ENCODE measurements at regions of chr17 and their contacts with region 1.

Region 1: GRCh38 chr17:1908699-1909309 is 79.0 kb downstream of the RPA1 start:
- DNase-seq: peak; percentile 39
- ATAC-seq: peak; percentile 90
- H3K4me3 ChIP-seq: no peak overlapping the region
- H3K27ac ChIP-seq: no peak overlapping the region
- H3K4me1 ChIP-seq: no peaks in the 10 kb centered on the region; the same call in 1 of the 2 replicates
- H3K27me3 ChIP-seq: 0 out of 2 replicates have a peak, but pooled peaks cover 2% of the 10 kb centered on the region
- CTCF ChIP-seq: peak; percentile 85

Region 2: DNA sequence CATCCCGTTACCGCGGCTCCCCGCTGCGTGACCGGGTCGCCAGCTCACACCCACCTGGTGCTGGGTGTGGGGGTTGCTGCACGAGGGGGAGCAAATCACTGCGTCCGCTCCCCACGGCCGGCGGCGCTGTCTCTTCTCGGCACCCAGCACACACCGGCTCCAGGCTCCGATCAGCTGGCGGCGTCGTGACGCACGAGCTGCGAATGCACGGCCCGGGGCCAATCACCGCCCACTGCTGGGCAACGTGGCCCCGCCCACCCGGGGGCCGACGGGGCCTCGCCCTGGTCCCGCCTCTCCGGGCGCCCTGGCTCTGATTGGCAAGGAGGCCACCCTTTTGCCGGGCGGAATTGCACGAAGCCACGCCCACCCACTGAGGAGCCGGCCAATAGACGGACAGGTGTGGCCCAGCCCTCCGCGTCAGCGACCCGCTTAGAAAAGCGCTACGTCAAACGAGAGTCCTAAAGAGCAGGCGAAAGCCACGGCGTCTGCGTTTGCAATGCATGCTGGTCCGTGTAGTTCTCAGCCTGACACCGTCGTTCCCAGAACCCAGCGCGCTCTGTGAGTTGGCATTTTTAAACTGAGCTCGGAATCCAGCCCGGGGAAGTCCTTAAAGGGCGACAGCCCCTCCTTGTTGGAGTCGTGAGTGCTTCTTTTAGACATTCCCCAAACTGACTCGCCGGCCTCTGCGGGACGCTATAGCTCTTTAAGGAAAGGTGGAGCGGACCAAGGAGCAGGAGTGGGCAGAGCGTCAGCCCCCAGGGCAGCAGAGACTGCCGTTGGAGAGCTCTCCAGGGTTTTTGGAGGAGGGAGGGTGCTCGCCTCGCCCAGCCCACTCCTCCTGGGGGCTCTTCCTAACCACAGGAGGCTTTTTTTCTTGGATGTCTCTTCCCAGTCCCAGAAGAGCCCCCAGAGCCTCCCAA is 192.5 kb before region 1 on chr17:
- CTCF ChIA-PET with region 1: no interaction called
- POLR2A ChIA-PET with region 1: interaction called, 10 read pairs
- in situ Hi-C with region 1: no loop called
- intact Hi-C with region 1: no loop called
- DNase-seq: peak; percentile 99
- ATAC-seq: peak; percentile 84
- H3K4me3 ChIP-seq: peak overlapping the region; percentile 78 to 79
- H3K27ac ChIP-seq: peak overlapping the region; percentile 99
- H3K4me1 ChIP-seq: peaks cover 43% of the 10 kb centered on the region
- H3K27me3 ChIP-seq: no peaks in the 10 kb centered on the region
- CTCF ChIP-seq: no peak

Region 3: DNA sequence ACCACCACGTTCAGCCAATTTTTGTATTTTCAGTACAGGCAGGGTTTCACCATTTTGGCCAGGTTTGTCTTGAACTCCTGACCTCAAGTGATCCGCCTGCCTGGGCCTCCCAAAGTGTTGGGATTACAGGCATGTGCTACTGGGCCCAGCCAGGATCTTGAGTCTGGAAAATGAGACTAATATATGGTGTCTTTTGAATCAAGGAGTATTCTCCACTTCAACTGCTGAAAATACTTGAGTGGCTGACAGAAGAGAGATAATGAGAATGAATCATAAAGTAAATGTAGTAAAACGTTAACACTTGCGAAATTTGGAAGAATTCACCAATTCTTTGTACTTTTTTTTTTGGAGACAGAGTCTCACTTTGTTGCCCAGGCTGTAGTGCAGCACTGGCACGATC is 95.7 kb before region 1 on chr17:
- CTCF ChIA-PET with region 1: no interaction called
- POLR2A ChIA-PET with region 1: no interaction called
- in situ Hi-C with region 1: no loop called
- intact Hi-C with region 1: no loop called
- DNase-seq: no peak
- ATAC-seq: no peak
- H3K4me3 ChIP-seq: no peak overlapping the region
- H3K27ac ChIP-seq: no peak overlapping the region
- H3K4me1 ChIP-seq: no peaks in the 10 kb centered on the region
- H3K27me3 ChIP-seq: no peaks in the 10 kb centered on the region
- CTCF ChIP-seq: no peak

Region 4: GRCh38 chr17:1865252-1866037 is 43.4 kb before region 1 on chr17:
- CTCF ChIA-PET with region 1: no interaction called
- POLR2A ChIA-PET with region 1: no interaction called
- in situ Hi-C with region 1: no loop called
- intact Hi-C with region 1: no loop called
- DNase-seq: peak; percentile 18
- ATAC-seq: no peak
- H3K4me3 ChIP-seq: no peak overlapping the region
- H3K27ac ChIP-seq: no peak overlapping the region
- H3K4me1 ChIP-seq: no peaks in the 10 kb centered on the region
- H3K27me3 ChIP-seq: no peaks in the 10 kb centered on the region
- CTCF ChIP-seq: peak; percentile 82

Region 5: GRCh38 chr17:1976000-1976682 is 67.3 kb after region 1 on chr17:
- CTCF ChIA-PET with region 1: no interaction called
- POLR2A ChIA-PET with region 1: no interaction called
- in situ Hi-C with region 1: no loop called
- intact Hi-C with region 1: no loop called
- DNase-seq: no peak
- ATAC-seq: no peak
- H3K4me3 ChIP-seq: no peak overlapping the region
- H3K27ac ChIP-seq: no peak overlapping the region
- H3K4me1 ChIP-seq: no peaks in the 10 kb centered on the region
- H3K27me3 ChIP-seq: no peaks in the 10 kb centered on the region
- CTCF ChIP-seq: no peak

Region 6: DNA sequence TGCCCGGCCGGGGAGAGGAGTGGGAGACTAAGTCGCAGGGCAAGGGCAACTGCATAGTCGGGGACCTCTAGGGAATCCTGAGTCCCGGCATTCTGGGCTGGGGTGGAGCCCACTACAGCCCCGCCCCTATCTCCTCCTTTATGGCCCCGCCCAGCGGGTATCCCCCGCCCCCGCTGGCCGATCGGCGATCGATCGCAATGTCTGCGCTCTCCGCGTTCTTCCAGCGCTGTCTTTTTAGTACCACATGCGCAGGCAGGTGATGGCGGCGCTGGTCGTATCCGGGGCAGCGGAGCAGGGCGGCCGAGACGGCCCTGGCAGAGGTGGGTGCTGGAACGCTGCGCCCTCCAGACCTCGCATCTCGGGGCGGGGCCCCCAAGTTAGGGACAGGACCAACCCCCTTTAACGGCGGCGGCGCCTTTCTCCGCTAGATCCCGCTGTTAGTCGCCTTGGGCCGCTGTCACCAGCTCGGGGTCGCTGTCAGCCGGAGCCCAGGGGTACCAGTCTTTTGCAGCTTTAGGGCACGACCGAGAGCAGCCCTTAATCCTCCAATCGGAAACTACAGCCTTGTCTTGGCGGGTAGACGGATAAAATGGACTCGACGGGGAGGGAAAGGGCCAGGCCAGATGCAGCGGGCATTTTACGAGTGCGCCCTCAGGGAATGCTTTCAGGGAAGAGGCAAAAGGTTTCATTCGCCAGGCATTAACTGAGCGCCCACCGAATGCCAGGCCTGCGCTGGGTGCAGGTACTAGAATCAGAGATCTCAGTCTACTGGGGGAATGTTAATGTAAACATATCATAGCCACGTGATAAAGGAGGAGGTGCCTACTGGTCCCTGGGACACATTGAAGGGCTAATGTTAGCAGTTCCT is 121.3 kb after region 1 on chr17 and contains the start of gene DPH1:
- CTCF ChIA-PET with region 1: interaction called, 22 read pairs
- POLR2A ChIA-PET with region 1: interaction called, 3 read pairs
- in situ Hi-C with region 1: no loop called
- intact Hi-C with region 1: loop called (anchors 2 kb)
- DNase-seq: no peak
- ATAC-seq: peak; percentile 87
- H3K4me3 ChIP-seq: peak within 1 kb of the TSS; percentile 89 to 97
- H3K27ac ChIP-seq: peak within 1 kb of the TSS; percentile 75
- H3K4me1 ChIP-seq: peaks cover 3% of the 10 kb centered on the region; the same call in 1 of the 2 replicates
- H3K27me3 ChIP-seq: no peaks in the 10 kb centered on the region
- CTCF ChIP-seq: no peak
- total RNA-seq, gene DPH1: 24.3 TPM

Measured in Panc1 (cell line).